Adrenal gland (tissue), 19 donors: ENCODE measurements at regions of chr10 and their contacts with region 1.

Region 1: GRCh38 chr10:122102869-122103525 is 114.0 kb downstream of the TACC2 start:
- DNase-seq: no peak
- H3K4me3 ChIP-seq: no peak overlapping the region
- H3K27ac ChIP-seq: no peak overlapping the region
- H3K4me1 ChIP-seq: no peaks in the 10 kb centered on the region
- H3K27me3 ChIP-seq: no peaks in the 10 kb centered on the region
- CTCF ChIP-seq: no peak
- POLR2A ChIP-seq: no peak

Region 2: DNA sequence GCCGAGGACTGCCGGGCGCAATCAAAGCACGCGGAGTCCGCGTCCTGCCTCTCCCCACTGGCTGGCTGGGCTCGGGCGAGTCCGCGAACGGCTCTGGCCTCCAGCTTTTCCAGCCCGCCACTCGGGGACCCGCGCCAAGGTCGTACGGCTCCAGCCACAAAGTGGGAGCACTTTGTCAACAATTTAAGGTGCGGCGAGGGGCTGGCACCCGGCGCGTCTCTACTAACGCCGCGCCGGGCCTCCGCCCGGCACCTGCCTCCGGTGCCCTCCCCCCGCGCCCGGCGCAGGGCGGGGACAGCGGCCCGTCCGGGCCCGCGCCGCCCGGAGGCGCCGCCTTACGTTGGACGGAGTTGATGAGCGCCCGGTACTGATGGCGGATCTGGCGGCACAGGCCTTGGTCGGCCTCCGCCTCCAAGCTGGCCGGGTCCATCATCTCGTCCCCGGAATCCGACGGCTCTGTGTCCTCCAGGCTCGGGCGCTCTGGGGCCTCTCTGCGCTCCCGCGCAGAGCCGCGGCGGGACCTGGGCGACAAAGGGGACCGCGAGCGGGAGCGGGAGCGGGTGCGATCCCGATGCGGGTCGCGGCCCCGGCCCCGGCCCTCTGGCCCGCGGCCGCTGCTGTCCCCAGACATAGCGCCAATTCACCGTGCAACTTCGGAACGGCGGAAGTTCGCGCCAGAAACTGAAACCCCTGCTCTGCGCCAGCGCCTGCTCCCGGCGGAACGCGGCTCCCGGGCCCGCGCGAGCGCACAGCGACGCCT is 128.3 kb before region 1 on chr10 and contains the start of gene NSMCE4A:
- intact Hi-C with region 1: loop called in 1 of 2 experiments (anchors 10 kb)
- DNase-seq: peak; percentile 75 to 84 (median 79)
- H3K4me3 ChIP-seq: peak within 1 kb of the TSS; percentile 35 to 97 (median 66)
- H3K27ac ChIP-seq: peak within 1 kb of the TSS; percentile 69 to 96 (median 94)
- H3K4me1 ChIP-seq: peaks cover 8 to 13% of the 10 kb centered on the region in 2 donors
- H3K27me3 ChIP-seq: no peaks in the 10 kb centered on the region
- CTCF ChIP-seq: peak in 4 of 6 experiments; percentile 42 to 62 (median 58)
- POLR2A ChIP-seq: peak in 1 of 2 donors; percentile 69
- total RNA-seq, gene NSMCE4A: 25.6 to 83.6 (median 39.0) TPM

Region 3: GRCh38 chr10:122051251-122051996 is 51.6 kb before region 1 on chr10:
- intact Hi-C with region 1: loop called in 1 of 2 experiments (anchors 10 kb)
- DNase-seq: peak; percentile 63 to 80 (median 77)
- H3K4me3 ChIP-seq: no peak overlapping the region
- H3K27ac ChIP-seq: peak overlapping the region; percentile 41 to 89 (median 69)
- H3K4me1 ChIP-seq: peaks cover 3 to 22% of the 10 kb centered on the region in 2 donors
- H3K27me3 ChIP-seq: no peaks in the 10 kb centered on the region
- CTCF ChIP-seq: peak; percentile 62 to 77 (median 66)
- POLR2A ChIP-seq: peak in 1 of 2 donors; percentile 37